Mucosa of descending colon (tissue), 3 donors: ENCODE measurements at regions of chr12 and their contacts with region 1.

Region 1: DNA sequence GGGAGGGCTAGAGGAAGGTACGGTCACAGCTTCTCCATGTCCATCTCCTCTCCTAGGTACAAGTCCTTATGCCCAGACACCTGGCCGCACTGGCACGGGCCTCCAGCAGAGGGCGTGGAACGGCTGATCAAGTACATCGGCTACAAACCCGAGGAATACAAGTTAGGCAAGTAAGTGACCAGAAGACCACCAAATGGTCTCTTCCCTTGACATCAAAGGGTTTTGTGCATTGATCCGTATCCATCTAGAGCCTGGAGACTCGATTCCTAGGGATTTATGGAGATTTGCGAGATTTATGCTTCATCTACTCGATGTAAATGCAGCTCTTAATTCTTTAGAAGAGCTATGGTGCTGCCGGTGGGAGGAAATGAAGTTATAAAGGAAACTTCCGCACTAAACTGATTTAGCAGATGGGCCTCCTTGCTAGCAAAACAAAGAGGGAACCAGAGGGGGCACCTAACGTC is 44.2 kb downstream of the KCTD10 start:
- DNase-seq: peak; percentile 90 to 98 (median 95)
- ATAC-seq: peak; percentile 93
- H3K4me3 ChIP-seq: no peak overlapping the region
- H3K4me1 ChIP-seq: peaks cover 3% of the 10 kb centered on the region
- CTCF ChIP-seq: peak; percentile 85

Region 2: DNA sequence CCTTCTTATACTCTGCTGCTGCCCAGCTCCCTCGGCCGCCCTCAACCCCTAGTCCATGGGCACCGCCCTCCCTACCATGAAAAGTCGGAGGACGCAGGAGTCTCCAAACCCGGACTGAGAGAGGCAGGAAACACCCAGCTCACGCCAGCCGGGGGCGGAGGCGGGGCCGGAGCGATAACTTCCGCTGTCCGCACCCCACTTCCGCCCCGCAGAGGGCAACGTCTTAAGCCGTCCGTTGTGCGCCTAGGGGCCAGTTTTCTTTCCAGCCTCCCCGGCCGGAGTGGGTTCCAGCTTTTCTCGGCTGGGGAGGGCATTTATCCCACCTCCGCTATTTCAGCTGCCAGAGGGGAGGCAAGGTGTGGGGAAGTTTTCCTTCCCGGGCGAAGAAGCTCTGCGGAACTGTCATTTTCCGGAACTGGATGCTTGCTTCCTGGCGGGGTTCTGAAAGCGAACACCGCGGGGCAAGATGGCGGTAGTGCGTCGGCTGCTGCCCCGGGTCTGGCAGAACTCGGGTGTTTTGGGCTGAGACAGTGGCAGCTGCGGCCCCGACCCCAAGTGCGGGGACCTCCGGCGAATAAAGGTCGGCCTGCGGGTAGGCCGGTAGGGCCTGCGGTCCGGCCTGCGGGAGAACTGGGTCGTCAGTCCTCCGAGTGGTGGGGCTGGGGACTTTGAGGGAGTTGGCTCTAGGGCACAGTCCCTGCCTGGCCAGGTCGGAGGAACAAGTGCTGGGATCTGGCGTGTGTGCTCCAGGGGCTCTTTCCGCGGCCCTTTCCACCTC is 44.5 kb after region 1 on chr12 and contains the starts of genes KCTD10 and UBE3B:
- intact Hi-C with region 1: loop called in 1 of 2 experiments (anchors 5 kb)
- DNase-seq: peak; percentile 91 to 93 (median 92)
- ATAC-seq: peak; percentile 99
- H3K4me3 ChIP-seq: peak within 1 kb of the TSS; percentile 58
- H3K4me1 ChIP-seq: peaks cover 26% of the 10 kb centered on the region
- CTCF ChIP-seq: no peak
- total RNA-seq, gene KCTD10: 81.1 to 86.3 (median 86.0) TPM
- total RNA-seq, gene UBE3B: 52.5 to 62.3 (median 54.6) TPM

Region 3: GRCh38 chr12:109597795-109598427 is 165.0 kb after region 1 on chr12:
- intact Hi-C with region 1: no loop called
- DNase-seq: peak; percentile 83 to 88 (median 86)
- ATAC-seq: peak; percentile 98
- H3K4me3 ChIP-seq: no peak overlapping the region
- H3K4me1 ChIP-seq: no peaks in the 10 kb centered on the region
- CTCF ChIP-seq: peak; percentile 95